Colonic mucosa (tissue), 4 donors: ENCODE measurements at regions of chr1 and their contacts with region 1.

Region 1: GRCh38 chr1:247119600-247120407 is 15.6 kb upstream of the ZNF669 start:
- DNase-seq: no peak
- H3K4me3 ChIP-seq: no peak overlapping the region
- H3K27ac ChIP-seq: no peak overlapping the region
- H3K4me1 ChIP-seq: no peaks in the 10 kb centered on the region
- H3K27me3 ChIP-seq: no peaks in the 10 kb centered on the region
- CTCF ChIP-seq: no peak

Region 2: DNA sequence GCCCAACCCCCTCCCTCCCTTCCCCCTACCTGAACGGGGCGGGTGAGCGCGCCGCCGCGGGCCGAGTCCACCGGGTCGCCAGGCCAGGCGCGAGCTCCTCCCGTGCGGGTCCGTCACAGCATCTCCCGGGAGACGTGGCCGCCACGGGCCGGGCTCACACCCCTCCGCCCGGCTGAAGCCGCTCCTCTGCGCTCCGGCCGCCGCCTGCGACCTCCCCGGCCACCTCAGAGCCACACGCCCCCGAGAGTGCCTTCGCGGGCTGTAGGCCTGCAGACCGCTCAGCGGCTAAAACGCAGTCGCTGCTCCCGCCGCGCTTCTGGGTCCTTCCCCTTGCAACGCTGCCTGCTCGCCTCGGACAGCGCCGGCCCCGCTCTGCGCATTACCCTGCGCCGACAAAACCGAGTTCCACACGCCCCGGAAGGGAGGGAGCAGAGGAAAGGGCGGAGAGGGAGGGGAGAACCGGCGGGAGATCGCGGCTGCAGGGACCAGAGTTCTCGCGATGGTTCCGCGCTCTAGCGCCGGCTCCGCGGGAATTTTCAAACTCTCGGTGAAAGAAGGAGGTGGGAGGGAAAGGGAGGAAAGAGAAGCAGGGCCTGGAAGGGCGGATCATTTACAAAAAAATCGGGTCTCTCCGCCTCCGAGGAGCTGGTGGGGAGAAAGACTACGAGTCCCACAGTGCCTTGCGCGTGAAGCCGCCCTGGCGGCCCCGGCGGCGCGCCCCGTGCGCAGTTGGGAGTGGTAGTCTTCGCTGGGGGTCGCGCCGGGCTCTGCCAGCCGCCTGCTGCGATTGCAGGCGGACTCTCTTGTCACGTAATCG is 188.0 kb before region 1 on chr1 and contains the start of gene AHCTF1:
- intact Hi-C with region 1: no loop called
- DNase-seq: peak; percentile 96
- H3K4me3 ChIP-seq: peak within 1 kb of the TSS; percentile 68
- H3K27ac ChIP-seq: peak within 1 kb of the TSS; percentile 94
- H3K4me1 ChIP-seq: peaks cover 5% of the 10 kb centered on the region
- H3K27me3 ChIP-seq: no peaks in the 10 kb centered on the region
- CTCF ChIP-seq: no peak
- total RNA-seq, gene AHCTF1: 22.8 to 24.5 TPM

Region 3: GRCh38 chr1:247172996-247173395 is 53.2 kb after region 1 on chr1:
- intact Hi-C with region 1: loop called (anchors 5 kb)
- DNase-seq: no peak
- H3K4me3 ChIP-seq: no peak overlapping the region
- H3K27ac ChIP-seq: no peak overlapping the region
- H3K4me1 ChIP-seq: no peaks in the 10 kb centered on the region
- H3K27me3 ChIP-seq: no peaks in the 10 kb centered on the region
- CTCF ChIP-seq: no peak